ENCODE measurements at regions of chr12 and their contacts with region 1.

Region 1: DNA sequence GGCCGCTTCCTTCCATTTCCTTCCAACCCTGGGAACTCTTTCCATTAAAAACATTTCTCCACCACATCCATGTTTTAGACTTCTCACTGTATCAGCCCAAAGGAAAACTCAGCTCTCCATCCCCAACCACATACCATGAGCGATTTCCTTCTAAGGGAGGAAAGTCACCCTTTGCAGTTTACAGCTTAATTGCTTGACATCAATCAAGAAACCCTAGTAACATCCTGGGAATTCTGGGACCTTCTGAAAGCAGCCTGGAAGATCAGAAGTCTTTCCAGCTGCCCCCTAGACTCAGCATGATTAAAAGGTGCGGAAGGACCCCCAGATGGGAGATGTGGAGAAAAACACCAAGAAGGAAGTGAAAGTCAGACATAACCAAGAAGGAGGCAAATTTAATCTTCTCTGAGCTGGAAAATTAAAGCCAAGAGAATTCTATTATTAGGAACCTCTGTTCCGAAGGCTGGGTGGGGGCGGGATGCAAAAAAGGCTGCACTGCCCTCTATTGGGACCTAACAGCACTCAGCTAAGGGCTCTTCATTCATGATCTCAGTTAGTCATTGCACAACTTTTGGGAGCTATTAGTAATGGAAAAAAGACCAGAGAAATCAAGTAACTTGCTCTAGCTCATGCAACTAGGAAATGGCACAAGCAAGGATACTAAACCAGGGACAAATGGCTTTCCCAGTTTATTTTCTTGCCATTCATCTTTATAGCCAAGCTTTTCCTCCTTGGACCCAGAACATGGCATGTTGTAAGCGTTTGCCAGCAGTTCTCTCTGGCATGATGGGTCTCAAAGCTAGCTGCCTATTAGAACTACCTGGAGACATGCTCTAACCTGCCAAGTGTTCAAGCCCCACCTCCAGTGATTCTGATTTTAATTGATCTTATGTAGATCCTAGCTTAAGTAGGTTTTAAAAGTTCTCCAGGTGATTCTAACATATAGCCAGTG is 73.1 kb upstream of the PLXNC1 start:
- DNase-seq: peak; percentile 86
- H3K4me3 Mint-ChIP-seq: no peak overlapping the region
- H3K27ac Mint-ChIP-seq: no peak overlapping the region
- H3K4me1 Mint-ChIP-seq: peaks cover 33% of the 10 kb centered on the region
- H3K27me3 Mint-ChIP-seq: no peaks in the 10 kb centered on the region
- CTCF ChIP-seq: peak; percentile 50

Region 2: GRCh38 chr12:93502802-93503623 is 572.2 kb before region 1 on chr12:
- CTCF ChIA-PET with region 1: interaction called, 15 read pairs
- POLR2A ChIA-PET with region 1: interaction called, 3 read pairs
- intact Hi-C with region 1: no loop called
- DNase-seq: peak; percentile 54
- H3K4me3 Mint-ChIP-seq: no peak overlapping the region
- H3K27ac Mint-ChIP-seq: no peak overlapping the region
- H3K4me1 Mint-ChIP-seq: no peaks in the 10 kb centered on the region
- H3K27me3 Mint-ChIP-seq: no peaks in the 10 kb centered on the region
- CTCF ChIP-seq: peak; percentile 81

Region 3: GRCh38 chr12:93766796-93767523 is 308.3 kb before region 1 on chr12:
- CTCF ChIA-PET with region 1: interaction called, 64 read pairs
- POLR2A ChIA-PET with region 1: interaction called, 12 read pairs
- intact Hi-C with region 1: loop called (anchors 1 kb)
- DNase-seq: peak; percentile 77
- H3K4me3 Mint-ChIP-seq: no peak overlapping the region
- H3K27ac Mint-ChIP-seq: no peak overlapping the region
- H3K4me1 Mint-ChIP-seq: peaks cover 26% of the 10 kb centered on the region
- H3K27me3 Mint-ChIP-seq: no peaks in the 10 kb centered on the region
- CTCF ChIP-seq: peak; percentile 57

Region 4: GRCh38 chr12:93802698-93803423 is 272.4 kb before region 1 on chr12:
- CTCF ChIA-PET with region 1: interaction called, 13 read pairs
- POLR2A ChIA-PET with region 1: no interaction called
- intact Hi-C with region 1: no loop called
- DNase-seq: peak; percentile 42
- H3K4me3 Mint-ChIP-seq: peak overlapping the region; percentile 25
- H3K27ac Mint-ChIP-seq: peak overlapping the region; percentile 91
- H3K4me1 Mint-ChIP-seq: peaks cover 56% of the 10 kb centered on the region
- H3K27me3 Mint-ChIP-seq: no peaks in the 10 kb centered on the region
- CTCF ChIP-seq: no peak

Region 5: GRCh38 chr12:93839064-93839463 is 236.2 kb before region 1 on chr12:
- CTCF ChIA-PET with region 1: interaction called, 3 read pairs
- POLR2A ChIA-PET with region 1: no interaction called
- intact Hi-C with region 1: loop called (anchors 10 kb)
- DNase-seq: peak; percentile 30
- H3K4me3 Mint-ChIP-seq: no peak overlapping the region
- H3K27ac Mint-ChIP-seq: no peak overlapping the region
- H3K4me1 Mint-ChIP-seq: peaks cover 16% of the 10 kb centered on the region
- H3K27me3 Mint-ChIP-seq: no peaks in the 10 kb centered on the region
- CTCF ChIP-seq: peak; percentile 19

Region 6: DNA sequence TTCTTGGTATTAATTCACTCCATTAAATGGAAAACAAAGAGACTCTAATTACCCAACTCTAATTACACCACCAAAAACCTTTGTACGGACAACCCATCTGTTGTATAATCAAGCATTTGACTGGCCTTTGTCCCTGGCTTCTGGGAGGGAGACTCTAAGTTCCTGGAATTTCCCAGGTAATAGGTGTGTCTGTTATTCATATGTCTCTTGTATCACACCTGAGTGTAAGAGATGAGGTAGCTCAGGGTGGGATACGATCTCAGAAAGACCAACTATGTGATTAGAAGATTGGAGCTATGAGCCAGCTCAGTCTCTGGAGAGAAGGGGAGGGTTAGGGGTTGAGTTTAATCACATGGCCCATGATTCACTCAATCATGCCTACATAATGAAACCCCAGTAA is 21.6 kb before region 1 on chr12:
- CTCF ChIA-PET with region 1: interaction called, 17 read pairs
- POLR2A ChIA-PET with region 1: interaction called, 4 read pairs
- intact Hi-C with region 1: no loop called
- DNase-seq: no peak
- H3K4me3 Mint-ChIP-seq: no peak overlapping the region
- H3K27ac Mint-ChIP-seq: no peak overlapping the region
- H3K4me1 Mint-ChIP-seq: peaks cover 20% of the 10 kb centered on the region
- H3K27me3 Mint-ChIP-seq: no peaks in the 10 kb centered on the region
- CTCF ChIP-seq: no peak

Region 7: DNA sequence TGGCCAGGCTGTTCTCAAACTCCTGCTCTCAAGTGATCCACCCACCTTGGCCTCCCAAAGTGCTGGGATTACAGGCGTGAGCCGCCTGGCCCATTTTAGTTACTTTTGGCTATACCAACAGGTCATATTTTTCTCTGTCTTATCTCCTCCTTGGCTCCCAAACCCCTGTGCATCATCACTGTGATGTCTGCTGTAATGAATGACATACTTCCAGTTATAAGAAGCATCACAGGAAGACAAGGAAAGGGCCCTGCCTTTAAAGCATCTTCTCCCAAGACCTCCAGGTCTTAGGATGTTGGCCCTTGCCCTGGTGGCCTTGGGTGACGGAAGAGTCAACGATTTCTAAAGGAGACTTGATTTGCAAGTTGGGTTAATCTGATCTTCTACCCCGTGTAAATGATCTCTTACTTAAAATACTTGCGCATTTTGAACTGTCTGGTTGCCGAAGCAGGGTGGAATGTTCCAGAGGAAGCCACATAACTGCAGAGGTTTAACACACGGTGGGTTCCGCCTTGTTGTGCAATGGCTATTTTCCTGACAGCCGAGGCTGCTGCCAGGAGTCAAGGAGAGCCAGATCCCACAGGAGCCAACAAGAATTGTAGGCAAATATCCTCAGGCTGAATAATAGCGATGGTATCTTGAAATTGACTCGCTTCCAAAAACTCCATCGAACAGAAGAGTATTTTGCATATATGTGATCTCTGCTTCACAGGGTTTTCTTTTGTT is 17.4 kb after region 1 on chr12:
- CTCF ChIA-PET with region 1: interaction called, 10 read pairs
- POLR2A ChIA-PET with region 1: interaction called, 9 read pairs
- intact Hi-C with region 1: no loop called
- DNase-seq: peak; percentile 95
- H3K4me3 Mint-ChIP-seq: peak overlapping the region; percentile 4
- H3K27ac Mint-ChIP-seq: peak overlapping the region; percentile 16
- H3K4me1 Mint-ChIP-seq: peaks cover 38% of the 10 kb centered on the region
- H3K27me3 Mint-ChIP-seq: no peaks in the 10 kb centered on the region
- CTCF ChIP-seq: no peak